ENCODE measurements at regions of chr2 and their contacts with region 1.

Region 1: GRCh38 chr2:85878719-85879385 is 9.9 kb downstream of the ST3GAL5 start:
- DNase-seq: no peak
- ATAC-seq: peak in 1 of 3 donors; percentile 11
- H3K4me3 ChIP-seq: no peak overlapping the region
- H3K4me3 Mint-ChIP-seq: peak overlapping the region; percentile 35
- H3K27ac ChIP-seq: no peak overlapping the region
- H3K27ac Mint-ChIP-seq: peak overlapping the region; percentile 84 to 88
- H3K4me1 ChIP-seq: peaks cover 32% of the 10 kb centered on the region
- H3K4me1 Mint-ChIP-seq: peaks cover 81 to 85% of the 10 kb centered on the region in 2 donors
- H3K27me3 ChIP-seq: no peaks in the 10 kb centered on the region
- H3K27me3 Mint-ChIP-seq: no peaks in the 10 kb centered on the region
- CTCF ChIP-seq: no peak

Region 2: GRCh38 chr2:85718009-85718391 is 160.9 kb before region 1 on chr2:
- intact Hi-C with region 1: no loop called
- DNase-seq: no peak
- ATAC-seq: no peak
- H3K4me3 ChIP-seq: no peak overlapping the region
- H3K4me3 Mint-ChIP-seq: no peak overlapping the region
- H3K27ac ChIP-seq: no peak overlapping the region
- H3K27ac Mint-ChIP-seq: no peak overlapping the region
- H3K4me1 ChIP-seq: no peaks in the 10 kb centered on the region
- H3K4me1 Mint-ChIP-seq: peaks cover 0 to 6% of the 10 kb centered on the region in 2 donors
- H3K27me3 ChIP-seq: no peaks in the 10 kb centered on the region
- H3K27me3 Mint-ChIP-seq: no peaks in the 10 kb centered on the region
- CTCF ChIP-seq: no peak

Region 3: DNA sequence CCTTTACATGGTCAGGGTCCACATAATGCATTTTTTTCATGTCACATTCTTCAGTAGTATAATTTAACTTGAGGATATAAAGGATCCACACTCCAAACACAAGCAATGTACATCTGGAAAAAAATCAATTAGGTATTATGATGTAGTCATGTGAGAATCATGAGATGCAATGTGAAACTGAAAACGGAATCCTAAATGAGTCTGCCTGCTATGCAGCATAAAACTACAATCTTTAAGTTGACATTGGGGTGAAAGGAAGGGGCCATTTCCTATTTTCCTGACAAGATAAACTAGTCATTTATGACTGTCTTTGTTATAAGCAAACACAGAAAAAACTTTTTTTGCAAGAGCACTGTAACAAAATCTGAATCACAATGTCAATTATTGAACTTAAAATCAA is 17.7 kb before region 1 on chr2:
- intact Hi-C with region 1: loop called (anchors 2 kb)
- DNase-seq: peak in 1 of 2 donors; percentile 67
- ATAC-seq: peak; percentile 40 to 56 (median 48)
- H3K4me3 ChIP-seq: no peak overlapping the region
- H3K4me3 Mint-ChIP-seq: peak overlapping the region; percentile 45
- H3K27ac ChIP-seq: peak overlapping the region; percentile 56
- H3K27ac Mint-ChIP-seq: peak overlapping the region; percentile 82 to 86
- H3K4me1 ChIP-seq: peaks cover 24% of the 10 kb centered on the region
- H3K4me1 Mint-ChIP-seq: peaks cover 51 to 53% of the 10 kb centered on the region in 2 donors
- H3K27me3 ChIP-seq: no peaks in the 10 kb centered on the region
- H3K27me3 Mint-ChIP-seq: no peaks in the 10 kb centered on the region
- CTCF ChIP-seq: no peak

Region 4: GRCh38 chr2:85935746-85936208 is 56.9 kb after region 1 on chr2:
- intact Hi-C with region 1: no loop called
- DNase-seq: no peak
- ATAC-seq: no peak
- H3K4me3 ChIP-seq: no peak overlapping the region
- H3K4me3 Mint-ChIP-seq: no peak overlapping the region
- H3K27ac ChIP-seq: no peak overlapping the region
- H3K27ac Mint-ChIP-seq: no peak overlapping the region
- H3K4me1 ChIP-seq: no peaks in the 10 kb centered on the region
- H3K4me1 Mint-ChIP-seq: peaks cover 4 to 9% of the 10 kb centered on the region in 2 donors
- H3K27me3 ChIP-seq: no peaks in the 10 kb centered on the region
- H3K27me3 Mint-ChIP-seq: no peaks in the 10 kb centered on the region
- CTCF ChIP-seq: no peak

Measured in natural killer cell (primary cell).